Activated B cell treated with CpG ODN at 0.5 μM for 24 hours (primary cell): ENCODE measurements at regions of chr2 and their contacts with region 1.

Region 1: GRCh38 chr2:65064728-65065552 is 8.7 kb downstream of the CEP68 start:
- DNase-seq: peak; percentile 63
- ATAC-seq: peak; percentile 89
- H3K4me3 Mint-ChIP-seq: peak overlapping the region; percentile 46
- H3K27ac Mint-ChIP-seq: peak overlapping the region; percentile 89
- H3K4me1 Mint-ChIP-seq: peaks cover 38% of the 10 kb centered on the region
- H3K27me3 Mint-ChIP-seq: no peaks in the 10 kb centered on the region
- CTCF ChIP-seq: peak; percentile 43

Region 2: DNA sequence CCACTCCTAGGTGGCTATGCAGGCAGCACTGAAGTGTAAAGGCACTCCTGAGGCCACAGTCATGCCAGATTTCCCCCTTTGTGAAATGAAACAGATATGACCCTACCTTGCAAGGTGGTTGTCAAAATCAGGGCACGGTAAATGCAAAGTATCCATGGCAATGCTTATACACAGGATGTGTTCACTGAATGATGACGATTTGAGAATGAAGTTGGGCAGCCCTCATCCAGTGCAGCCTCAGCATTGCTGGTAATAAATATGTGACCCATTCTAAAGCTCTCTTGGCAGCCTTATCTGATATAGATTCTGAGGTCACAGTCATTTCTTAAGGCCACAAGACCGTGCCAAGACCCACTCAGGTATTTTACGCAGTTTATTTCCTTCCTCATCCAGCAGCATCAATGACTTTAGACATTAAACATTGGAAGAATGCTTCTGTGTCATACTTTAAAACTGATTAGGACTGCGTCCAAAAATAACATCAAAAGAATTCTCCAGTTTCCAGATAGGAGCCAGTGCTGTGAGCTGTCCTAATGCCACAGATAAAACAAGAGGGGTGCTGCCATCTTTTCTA is 285.7 kb before region 1 on chr2:
- CTCF ChIA-PET with region 1: no interaction called
- POLR2A ChIA-PET with region 1: no interaction called
- intact Hi-C with region 1: no loop called
- DNase-seq: no peak
- ATAC-seq: peak; percentile 14
- H3K4me3 Mint-ChIP-seq: no peak overlapping the region
- H3K27ac Mint-ChIP-seq: no peak overlapping the region
- H3K4me1 Mint-ChIP-seq: no peaks in the 10 kb centered on the region
- H3K27me3 Mint-ChIP-seq: no peaks in the 10 kb centered on the region
- CTCF ChIP-seq: no peak

Region 3: DNA sequence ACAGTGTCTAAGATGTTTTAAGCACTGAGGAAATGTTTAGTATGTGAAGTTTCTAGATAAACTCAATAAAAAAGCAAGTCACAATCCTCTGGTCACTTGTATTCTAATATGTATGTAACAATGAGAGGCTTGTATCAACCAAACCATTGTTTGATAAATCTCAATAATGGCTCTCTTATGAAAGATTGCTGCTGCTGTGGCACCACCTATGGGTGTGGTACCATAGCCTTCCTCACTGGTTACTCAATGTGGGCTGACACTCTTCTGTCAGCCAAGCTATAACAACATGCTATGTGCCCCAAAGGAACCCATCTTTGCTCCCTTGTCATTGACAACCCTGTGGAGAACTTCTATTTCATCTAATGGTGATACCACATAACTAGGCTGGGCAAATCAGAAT is 77.6 kb after region 1 on chr2:
- CTCF ChIA-PET with region 1: no interaction called
- POLR2A ChIA-PET with region 1: no interaction called
- intact Hi-C with region 1: loop called (anchors 2 kb)
- DNase-seq: no peak
- ATAC-seq: peak; percentile 28
- H3K4me3 Mint-ChIP-seq: no peak overlapping the region
- H3K27ac Mint-ChIP-seq: no peak overlapping the region
- H3K4me1 Mint-ChIP-seq: no peaks in the 10 kb centered on the region
- H3K27me3 Mint-ChIP-seq: peaks cover 11% of the 10 kb centered on the region
- CTCF ChIP-seq: no peak

Region 4: GRCh38 chr2:65169760-65170136 is 104.8 kb after region 1 on chr2:
- CTCF ChIA-PET with region 1: interaction called, 48 read pairs
- POLR2A ChIA-PET with region 1: interaction called, 12 read pairs
- intact Hi-C with region 1: loop called (anchors 1 kb)
- DNase-seq: no peak
- ATAC-seq: no peak
- H3K4me3 Mint-ChIP-seq: no peak overlapping the region
- H3K27ac Mint-ChIP-seq: no peak overlapping the region
- H3K4me1 Mint-ChIP-seq: peaks cover 16% of the 10 kb centered on the region
- H3K27me3 Mint-ChIP-seq: no peaks in the 10 kb centered on the region
- CTCF ChIP-seq: no peak

Region 5: DNA sequence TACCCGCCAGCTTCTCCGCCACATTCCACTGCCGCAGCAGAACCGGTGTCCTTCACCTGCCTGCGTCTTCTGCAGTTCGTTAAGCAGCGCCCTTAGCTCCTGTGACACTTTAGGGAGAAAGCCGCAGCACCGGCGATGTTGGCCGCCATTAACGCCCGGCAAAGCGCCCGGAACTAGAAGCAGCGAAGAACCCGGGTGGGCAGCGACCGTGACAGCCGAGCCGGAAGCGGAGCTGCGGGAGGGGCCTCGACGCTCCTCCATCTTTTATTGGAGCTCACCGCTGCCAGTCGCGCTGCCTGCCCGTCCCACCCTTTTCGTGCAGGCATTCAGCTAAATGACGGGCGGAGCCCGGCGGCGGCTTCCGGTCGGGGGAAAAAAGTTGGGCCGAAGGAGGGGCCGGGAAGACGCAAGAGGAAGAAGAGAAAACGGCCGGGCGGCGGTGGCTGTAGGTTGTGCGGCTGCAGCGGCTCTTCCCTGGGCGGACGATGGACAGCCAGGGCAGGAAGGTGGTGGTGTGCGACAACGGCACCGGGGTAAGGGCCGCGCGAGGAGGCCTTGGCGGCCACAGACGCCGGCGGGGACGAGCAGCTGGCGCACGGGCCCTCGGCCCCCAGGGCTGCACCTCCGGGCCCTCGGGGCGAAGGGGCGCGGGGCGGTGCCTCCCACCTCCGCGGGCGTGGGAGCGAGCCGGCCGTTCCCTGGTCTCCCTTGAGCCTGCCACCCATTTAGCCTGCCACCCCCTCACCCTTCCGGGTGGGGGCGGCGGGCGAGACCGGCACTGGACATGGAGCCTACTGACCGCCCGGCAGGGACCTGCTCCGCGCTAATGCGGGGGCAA is 162.7 kb after region 1 on chr2 and contains the start of gene ACTR2:
- CTCF ChIA-PET with region 1: no interaction called
- POLR2A ChIA-PET with region 1: interaction called, 15 read pairs
- intact Hi-C with region 1: loop called (anchors 2 kb)
- DNase-seq: peak; percentile 88
- ATAC-seq: peak; percentile 90
- H3K4me3 Mint-ChIP-seq: peak within 1 kb of the TSS; percentile 99
- H3K27ac Mint-ChIP-seq: peak within 1 kb of the TSS; percentile 100
- H3K4me1 Mint-ChIP-seq: peaks cover 45% of the 10 kb centered on the region
- H3K27me3 Mint-ChIP-seq: no peaks in the 10 kb centered on the region
- CTCF ChIP-seq: no peak
- total RNA-seq, gene ACTR2: 484 and 493 TPM in 2 replicates

Region 6: DNA sequence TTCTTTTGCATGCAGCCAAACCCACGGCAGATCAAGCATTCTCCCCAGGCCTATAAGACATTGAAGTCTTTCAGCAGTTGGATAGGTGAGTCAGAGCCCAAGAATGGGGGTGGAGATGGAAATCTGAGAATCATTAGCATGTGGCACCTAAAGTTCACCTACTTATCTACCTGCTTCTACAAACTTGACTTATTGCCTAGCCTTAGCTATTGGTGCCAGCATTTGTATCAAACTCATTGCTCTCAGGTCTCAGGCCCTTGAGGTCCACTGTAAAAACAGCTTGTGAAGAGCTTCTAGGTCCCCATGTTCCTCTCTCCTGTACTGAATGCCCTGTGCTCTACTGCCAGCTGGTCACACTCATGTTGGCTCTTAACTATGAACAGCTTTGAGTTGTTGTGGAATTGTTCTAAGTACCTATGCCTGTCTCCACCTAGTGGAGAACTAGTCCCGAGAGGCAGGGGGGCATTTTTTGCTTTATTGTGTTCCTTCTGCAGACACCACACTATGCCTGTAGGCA is 645.9 kb after region 1 on chr2:
- CTCF ChIA-PET with region 1: interaction called, 3 read pairs
- POLR2A ChIA-PET with region 1: no interaction called
- intact Hi-C with region 1: loop called (anchors 2 kb)
- DNase-seq: no peak
- ATAC-seq: no peak
- H3K4me3 Mint-ChIP-seq: no peak overlapping the region
- H3K27ac Mint-ChIP-seq: no peak overlapping the region
- H3K4me1 Mint-ChIP-seq: no peaks in the 10 kb centered on the region
- H3K27me3 Mint-ChIP-seq: peaks cover 14% of the 10 kb centered on the region
- CTCF ChIP-seq: no peak